ENCODE measurements at regions of chr13 and their contacts with region 1.

Region 1: DNA sequence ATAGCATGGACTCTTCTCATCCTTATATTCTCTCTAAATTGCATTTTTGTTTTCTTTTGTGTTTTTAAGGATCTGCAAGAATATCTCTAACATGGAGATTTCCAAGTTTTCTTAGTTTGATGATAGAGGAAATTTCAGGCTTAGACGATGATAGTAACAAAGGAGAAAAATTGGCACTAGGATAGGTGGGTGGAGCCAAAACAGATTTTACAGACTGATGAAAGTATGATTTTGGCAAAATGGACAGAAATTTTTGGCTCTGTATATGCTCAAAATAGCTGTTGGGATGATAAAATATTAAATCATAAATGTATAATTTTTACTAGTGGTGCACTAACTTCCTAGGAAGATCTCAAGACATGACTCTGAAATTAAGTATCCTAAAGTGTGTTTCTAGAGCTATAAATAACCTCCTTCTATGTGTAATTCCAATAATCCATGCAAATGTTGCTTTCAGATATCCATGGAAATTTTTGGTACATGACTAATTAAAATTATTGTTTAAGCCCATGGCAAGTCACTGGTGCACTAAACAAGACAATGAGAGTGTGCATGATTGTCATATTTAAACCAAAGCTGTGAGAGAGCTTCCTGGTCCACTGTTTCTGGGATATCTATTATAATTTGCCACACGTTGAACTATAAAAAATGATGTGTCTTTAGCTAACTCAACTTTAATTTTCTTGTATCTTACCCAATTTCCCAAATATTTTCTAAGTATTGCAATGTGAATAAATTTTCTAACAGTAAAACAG is 55.8 kb upstream of the NBEA start:
- DNase-seq: no peak
- ATAC-seq: no peak
- H3K4me3 ChIP-seq: no peak overlapping the region
- H3K27ac ChIP-seq: no peak overlapping the region
- H3K4me1 ChIP-seq: peaks cover 0 to 4% of the 10 kb centered on the region in 2 experiments; a peak in 2 of 4 replicates
- H3K27me3 ChIP-seq: no peaks in the 10 kb centered on the region
- CTCF ChIP-seq: no peak
- POLR2A ChIP-seq: no peak
- RAD21 ChIP-seq: no peak

Region 2: DNA sequence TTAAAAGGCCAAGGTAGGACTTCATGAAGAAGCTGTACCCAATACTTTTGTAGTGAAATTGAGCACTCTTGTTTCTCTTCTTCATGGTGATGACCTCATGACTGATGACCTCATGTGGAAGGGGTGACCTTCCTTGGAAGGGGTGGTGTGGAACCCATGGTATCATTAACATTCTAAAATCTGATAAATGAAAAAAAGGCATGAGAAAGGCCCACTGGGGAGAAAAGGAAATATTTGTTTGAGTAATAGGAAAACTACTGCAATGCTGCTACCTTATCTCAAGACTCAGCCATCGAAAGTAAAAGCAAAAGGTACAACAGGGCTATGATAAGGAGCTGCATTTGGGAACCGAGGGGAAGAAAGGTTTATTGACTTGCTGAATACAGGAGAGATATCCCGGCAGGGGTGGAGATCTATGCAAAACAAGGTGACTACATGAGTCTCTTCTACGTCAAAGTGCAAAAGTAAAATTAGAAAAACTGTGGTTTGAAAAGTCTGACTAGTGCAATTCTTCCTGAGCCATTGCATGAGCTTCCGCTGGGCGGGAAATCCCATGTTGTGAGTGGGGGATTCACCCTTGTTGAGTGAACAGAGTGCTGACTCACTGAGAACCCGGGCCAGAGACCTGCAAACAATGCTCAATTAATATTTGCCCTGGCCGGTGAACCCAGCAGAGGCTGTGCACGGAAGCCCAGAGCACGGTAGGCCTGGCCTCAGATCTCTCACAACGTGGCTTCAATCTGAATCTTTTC is 1207.2 kb before region 1 on chr13:
- CTCF ChIA-PET with region 1: no interaction called
- POLR2A ChIA-PET with region 1: no interaction called
- RAD21 ChIA-PET with region 1: no interaction called
- intact Hi-C with region 1: loop called (anchors 5 kb)
- DNase-seq: no peak
- ATAC-seq: no peak
- H3K4me3 ChIP-seq: no peak overlapping the region
- H3K27ac ChIP-seq: no peak overlapping the region
- H3K4me1 ChIP-seq: 0 out of 4 replicates have a peak, but pooled peaks cover 0 to 4% of the 10 kb centered on the region in 2 experiments
- H3K27me3 ChIP-seq: no peaks in the 10 kb centered on the region
- CTCF ChIP-seq: no peak
- POLR2A ChIP-seq: no peak
- RAD21 ChIP-seq: no peak

Region 3: GRCh38 chr13:34847759-34848158 is 38.5 kb before region 1 on chr13:
- CTCF ChIA-PET with region 1: no interaction called
- POLR2A ChIA-PET with region 1: no interaction called
- RAD21 ChIA-PET with region 1: no interaction called
- intact Hi-C with region 1: loop called (anchors 2 kb)
- DNase-seq: no peak
- ATAC-seq: peak; percentile 46; the same call in 1 of the 2 replicates
- H3K4me3 ChIP-seq: no peak overlapping the region
- H3K27ac ChIP-seq: no peak overlapping the region
- H3K4me1 ChIP-seq: peaks cover 4 to 10% of the 10 kb centered on the region in 2 experiments; a peak in 2 of 4 replicates
- H3K27me3 ChIP-seq: no peaks in the 10 kb centered on the region
- CTCF ChIP-seq: no peak
- POLR2A ChIP-seq: no peak
- RAD21 ChIP-seq: no peak

Region 4: DNA sequence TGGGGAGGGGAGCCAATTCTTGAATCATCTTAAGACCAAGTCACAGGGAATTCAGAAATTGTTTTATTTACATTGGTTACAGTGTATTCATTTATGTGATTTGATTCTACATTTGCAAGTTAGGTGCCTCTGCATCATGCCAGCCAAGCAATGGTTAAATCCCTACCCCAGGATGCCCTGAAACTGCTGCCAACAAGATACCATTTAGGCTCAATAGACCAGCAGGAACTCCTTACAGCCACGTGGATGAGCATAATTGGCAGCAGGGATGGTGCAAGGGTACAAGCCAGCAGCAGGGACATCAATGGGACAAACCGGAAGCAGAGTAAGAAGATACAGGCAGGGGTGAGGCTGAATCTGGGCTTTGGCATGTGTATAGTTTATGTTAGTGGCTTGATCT is 16.6 kb before region 1 on chr13:
- CTCF ChIA-PET with region 1: no interaction called
- POLR2A ChIA-PET with region 1: no interaction called
- RAD21 ChIA-PET with region 1: no interaction called
- intact Hi-C with region 1: no loop called
- DNase-seq: no peak
- ATAC-seq: no peak
- H3K4me3 ChIP-seq: no peak overlapping the region
- H3K27ac ChIP-seq: no peak overlapping the region
- H3K4me1 ChIP-seq: peaks cover 9 to 16% of the 10 kb centered on the region in 2 experiments
- H3K27me3 ChIP-seq: no peaks in the 10 kb centered on the region
- CTCF ChIP-seq: no peak
- POLR2A ChIP-seq: no peak
- RAD21 ChIP-seq: no peak

Measured in HCT116 (cell line).